ENCODE measurements at regions of chr9 and their contacts with region 1.

Region 1: DNA sequence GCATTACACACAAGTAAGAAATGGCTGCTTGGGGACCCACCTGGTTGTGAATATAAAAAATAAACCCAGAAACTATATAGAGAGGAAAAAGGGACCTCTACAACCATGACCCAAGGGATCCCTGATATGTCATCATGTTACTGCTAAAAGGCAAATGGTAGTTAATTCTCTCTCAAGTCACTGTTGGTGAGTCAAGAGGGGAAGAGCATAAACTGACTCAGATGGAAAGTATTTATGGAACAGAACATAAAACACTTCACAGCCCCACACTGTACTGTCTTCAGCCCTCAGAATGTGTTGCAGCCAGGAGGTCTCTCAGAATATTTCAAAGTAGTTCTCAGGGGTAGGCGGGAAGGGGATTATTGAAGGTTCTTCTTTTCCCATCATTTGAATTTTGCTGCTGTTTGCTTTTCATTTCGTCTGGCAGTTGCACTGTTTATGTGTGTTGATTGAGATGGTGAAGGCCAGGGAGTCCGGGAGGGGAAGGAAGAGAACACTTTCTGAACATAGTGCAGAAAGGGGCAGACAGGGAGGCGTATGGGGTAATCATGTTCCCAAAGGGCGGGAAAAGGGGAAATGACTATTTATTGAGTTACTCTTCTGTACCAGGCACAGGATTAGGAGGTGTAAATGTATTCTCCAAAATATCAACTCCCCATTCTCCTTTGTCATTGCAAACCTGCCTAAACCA is 85.5 kb downstream of the TEK start:
- DNase-seq: peak in 1 of 2 donors; percentile 47
- ATAC-seq: peak; percentile 73
- H3K4me3 ChIP-seq: no peak overlapping the region
- H3K27ac ChIP-seq: peak overlapping the region; percentile 37 to 51
- H3K4me1 ChIP-seq: peaks cover 6 to 11% of the 10 kb centered on the region in 2 donors
- H3K27me3 ChIP-seq: no peaks in the 10 kb centered on the region

Region 2: GRCh38 chr9:27019589-27019988 is 175.0 kb before region 1 on chr9:
- intact Hi-C with region 1: no loop called
- DNase-seq: no peak
- ATAC-seq: no peak
- H3K4me3 ChIP-seq: no peak overlapping the region
- H3K27ac ChIP-seq: no peak overlapping the region
- H3K4me1 ChIP-seq: no peaks in the 10 kb centered on the region
- H3K27me3 ChIP-seq: no peaks in the 10 kb centered on the region

Region 3: GRCh38 chr9:27154908-27155307 is 39.6 kb before region 1 on chr9:
- intact Hi-C with region 1: loop called in 1 of 2 experiments (anchors 5 kb)
- DNase-seq: no peak
- ATAC-seq: peak; percentile 47
- H3K4me3 ChIP-seq: no peak overlapping the region
- H3K27ac ChIP-seq: peak overlapping the region in 1 of 2 donors; percentile 20
- H3K4me1 ChIP-seq: peaks cover 0 to 7% of the 10 kb centered on the region in 2 donors
- H3K27me3 ChIP-seq: no peaks in the 10 kb centered on the region